ENCODE measurements at regions of chr13 and their contacts with region 1.

Region 1: DNA sequence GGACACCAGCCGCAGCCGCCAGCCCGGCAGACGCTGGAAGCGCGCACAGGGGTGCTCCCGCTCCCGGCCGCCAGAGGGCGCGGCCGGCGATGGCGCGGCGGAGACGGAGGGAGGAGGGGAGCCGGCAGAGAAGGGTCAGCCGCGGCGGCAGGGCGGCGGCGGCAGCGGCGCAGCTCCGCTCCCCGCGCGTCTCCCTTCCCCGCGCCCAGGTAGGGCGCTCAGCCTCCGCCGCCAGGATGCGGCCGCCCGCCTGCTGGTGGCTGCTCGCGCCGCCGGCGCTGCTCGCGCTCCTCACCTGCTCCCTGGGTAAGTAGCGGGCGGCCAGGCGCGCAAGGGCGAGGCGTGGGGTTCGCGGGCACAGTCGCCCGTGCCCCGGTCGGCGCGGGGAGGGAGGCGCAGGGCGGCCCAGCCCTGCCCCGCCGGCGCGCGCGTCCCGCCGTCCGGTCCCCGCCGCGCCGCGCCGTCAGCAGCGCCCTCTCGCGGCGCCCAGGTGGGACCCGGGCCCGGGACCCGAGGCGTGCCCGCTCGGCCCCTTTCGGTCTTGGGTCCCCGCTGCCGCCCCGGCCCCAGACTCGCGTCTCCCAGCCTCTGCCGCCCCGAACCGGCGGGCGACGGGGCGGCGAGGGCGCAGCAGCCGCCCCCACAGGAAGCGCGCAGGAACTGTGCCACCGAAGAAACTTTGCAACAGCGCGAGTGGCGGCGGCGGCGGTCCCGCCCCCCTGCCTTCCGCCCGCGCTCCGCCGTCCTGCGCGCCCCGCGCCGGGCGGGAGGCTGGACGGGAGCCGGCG is at the start of gene B3GLCT:
- DNase-seq: peak; percentile 72
- ATAC-seq: peak; percentile 81
- H3K4me3 Mint-ChIP-seq: peak within 1 kb of the TSS; percentile 79
- H3K27ac Mint-ChIP-seq: peak within 1 kb of the TSS; percentile 79
- H3K4me1 Mint-ChIP-seq: peaks cover 25% of the 10 kb centered on the region
- H3K27me3 Mint-ChIP-seq: no peaks in the 10 kb centered on the region
- CTCF ChIP-seq: peak; percentile 85
- total RNA-seq, gene B3GLCT: 2.4 to 2.5 TPM

Region 2: GRCh38 chr13:31161828-31162590 is 38.0 kb before region 1 on chr13 and contains the start of gene HSPH1:
- CTCF ChIA-PET with region 1: no interaction called
- POLR2A ChIA-PET with region 1: no interaction called
- intact Hi-C with region 1: loop called (anchors 5 kb)
- DNase-seq: peak; percentile 99
- ATAC-seq: peak; percentile 88
- H3K4me3 Mint-ChIP-seq: peak within 1 kb of the TSS; percentile 87
- H3K27ac Mint-ChIP-seq: peak within 1 kb of the TSS; percentile 99
- H3K4me1 Mint-ChIP-seq: peaks cover 39% of the 10 kb centered on the region
- H3K27me3 Mint-ChIP-seq: no peaks in the 10 kb centered on the region
- CTCF ChIP-seq: no peak
- total RNA-seq, gene HSPH1: 214 TPM